Adrenal gland (tissue), 19 donors: ENCODE measurements at regions of chr11 and their contacts with region 1.

Region 1: DNA sequence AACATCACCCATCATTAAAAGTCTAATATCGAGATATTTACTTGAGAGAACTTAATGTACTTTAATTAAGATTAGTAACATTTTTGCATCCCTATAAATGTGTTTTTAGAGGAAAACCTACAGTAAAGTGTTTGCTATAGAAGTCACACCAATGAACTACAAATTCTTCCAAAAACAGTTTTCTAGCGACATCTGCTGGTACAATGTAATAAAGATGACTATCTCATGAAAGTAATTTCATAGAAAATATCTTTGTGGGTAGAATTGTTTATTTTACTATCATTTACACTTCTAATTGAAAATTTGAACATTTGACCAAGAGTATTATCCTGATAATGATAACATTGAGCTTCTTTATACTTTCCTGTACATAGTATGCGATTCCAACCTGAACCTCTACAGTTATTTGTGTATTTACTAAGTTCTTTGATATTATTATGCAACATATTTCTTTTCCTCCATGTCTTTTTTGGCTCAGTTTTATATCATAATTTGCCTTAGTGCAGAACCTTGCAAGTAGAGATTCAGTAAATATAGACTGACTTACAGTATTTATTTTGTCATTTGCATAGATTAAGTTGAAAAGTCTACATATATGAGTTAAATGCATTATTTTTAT is 252.7 kb downstream of the TMEM135 start:
- DNase-seq: no peak
- H3K4me3 ChIP-seq: no peak overlapping the region
- H3K27ac ChIP-seq: no peak overlapping the region
- H3K4me1 ChIP-seq: no peaks in the 10 kb centered on the region
- H3K27me3 ChIP-seq: no peaks in the 10 kb centered on the region
- CTCF ChIP-seq: peak; percentile 44 to 82 (median 69)
- POLR2A ChIP-seq: no peak

Region 2: GRCh38 chr11:86818466-86819192 is 471.8 kb before region 1 on chr11:
- intact Hi-C with region 1: no loop called
- DNase-seq: no peak
- H3K4me3 ChIP-seq: no peak overlapping the region
- H3K27ac ChIP-seq: no peak overlapping the region
- H3K4me1 ChIP-seq: peaks cover 0 to 7% of the 10 kb centered on the region in 2 donors
- H3K27me3 ChIP-seq: no peaks in the 10 kb centered on the region
- CTCF ChIP-seq: peak; percentile 80 to 87 (median 83)
- POLR2A ChIP-seq: no peak

Region 3: DNA sequence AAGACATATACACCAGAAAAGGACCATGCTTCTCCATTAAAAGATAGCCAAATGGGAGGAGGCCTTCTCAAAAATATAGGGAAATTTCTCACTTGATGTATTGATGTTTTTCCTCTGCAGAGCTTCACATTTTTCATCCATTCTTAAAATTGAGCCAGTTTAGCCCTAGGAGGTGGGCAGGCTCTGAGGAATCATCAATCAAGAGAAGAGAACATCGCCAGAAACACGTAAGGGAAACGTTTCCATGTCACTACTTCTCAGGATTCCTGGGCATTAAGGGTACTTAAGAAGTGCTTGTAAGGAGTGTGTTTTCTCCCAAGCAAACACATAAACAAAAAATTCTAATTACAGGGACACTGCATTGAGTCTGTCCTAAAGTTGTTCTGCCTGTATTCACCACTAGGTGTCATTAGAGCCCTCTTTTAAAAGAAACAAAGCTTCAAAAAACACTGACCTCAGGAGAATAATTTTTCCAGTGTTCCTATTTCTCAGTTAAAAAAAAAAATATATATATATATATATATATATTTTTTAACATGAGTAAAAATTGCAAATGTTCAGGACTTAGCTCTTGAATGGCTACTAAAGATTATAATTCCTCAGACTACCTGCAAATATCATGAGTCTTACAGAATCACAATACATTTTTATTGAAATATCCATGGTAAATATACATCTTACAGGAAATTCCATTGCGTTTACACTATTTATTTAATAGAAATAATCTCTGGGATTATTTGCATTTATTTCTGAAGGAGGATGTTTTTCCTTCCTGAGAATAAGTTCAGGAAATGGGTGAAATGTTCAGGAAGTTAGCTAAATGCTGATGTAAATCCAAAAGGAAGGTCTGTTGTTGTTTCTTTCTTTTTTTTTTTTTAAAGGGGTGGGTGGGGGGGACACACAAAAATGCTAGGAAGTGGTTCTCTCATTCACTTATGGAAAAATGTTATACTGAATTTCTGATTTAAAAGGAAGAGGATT is 351.2 kb before region 1 on chr11:
- intact Hi-C with region 1: loop called (anchors 5 kb)
- DNase-seq: no peak
- H3K4me3 ChIP-seq: no peak overlapping the region
- H3K27ac ChIP-seq: peak overlapping the region in 4 of 5 donors; percentile 33 to 84 (median 70)
- H3K4me1 ChIP-seq: peaks cover 23 to 49% of the 10 kb centered on the region in 2 donors
- H3K27me3 ChIP-seq: no peaks in the 10 kb centered on the region
- CTCF ChIP-seq: peak; percentile 36 to 80 (median 72)
- POLR2A ChIP-seq: no peak